ENCODE measurements at regions of chr16 and their contacts with region 1.

Region 1: DNA sequence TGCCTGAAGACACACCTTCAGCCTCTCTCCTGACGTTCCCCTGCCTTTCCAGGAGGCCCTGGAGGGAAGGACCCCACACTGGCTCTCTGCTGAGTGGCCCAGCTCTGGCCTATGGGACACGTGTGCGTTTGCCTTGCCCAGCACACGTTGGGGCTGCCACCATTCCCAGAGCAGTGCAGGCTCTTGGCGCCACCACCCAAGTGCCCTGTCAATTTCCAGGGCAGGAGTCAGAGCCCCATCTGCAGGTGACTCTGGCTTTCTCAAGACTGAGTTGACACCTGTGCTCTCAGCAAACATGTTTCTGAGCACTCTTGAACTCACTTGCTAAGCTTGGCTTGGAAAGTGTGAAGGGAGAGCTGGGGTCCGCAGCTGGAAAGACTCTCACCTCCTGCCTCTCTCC is 4.7 kb upstream of the IRF8 start:
- DNase-seq: peak; percentile 67
- H3K4me3 Mint-ChIP-seq: no peak overlapping the region
- H3K27ac Mint-ChIP-seq: no peak overlapping the region
- H3K4me1 Mint-ChIP-seq: peaks cover 45% of the 10 kb centered on the region
- H3K27me3 Mint-ChIP-seq: peaks cover 43% of the 10 kb centered on the region
- CTCF ChIP-seq: peak; percentile 31

Region 2: DNA sequence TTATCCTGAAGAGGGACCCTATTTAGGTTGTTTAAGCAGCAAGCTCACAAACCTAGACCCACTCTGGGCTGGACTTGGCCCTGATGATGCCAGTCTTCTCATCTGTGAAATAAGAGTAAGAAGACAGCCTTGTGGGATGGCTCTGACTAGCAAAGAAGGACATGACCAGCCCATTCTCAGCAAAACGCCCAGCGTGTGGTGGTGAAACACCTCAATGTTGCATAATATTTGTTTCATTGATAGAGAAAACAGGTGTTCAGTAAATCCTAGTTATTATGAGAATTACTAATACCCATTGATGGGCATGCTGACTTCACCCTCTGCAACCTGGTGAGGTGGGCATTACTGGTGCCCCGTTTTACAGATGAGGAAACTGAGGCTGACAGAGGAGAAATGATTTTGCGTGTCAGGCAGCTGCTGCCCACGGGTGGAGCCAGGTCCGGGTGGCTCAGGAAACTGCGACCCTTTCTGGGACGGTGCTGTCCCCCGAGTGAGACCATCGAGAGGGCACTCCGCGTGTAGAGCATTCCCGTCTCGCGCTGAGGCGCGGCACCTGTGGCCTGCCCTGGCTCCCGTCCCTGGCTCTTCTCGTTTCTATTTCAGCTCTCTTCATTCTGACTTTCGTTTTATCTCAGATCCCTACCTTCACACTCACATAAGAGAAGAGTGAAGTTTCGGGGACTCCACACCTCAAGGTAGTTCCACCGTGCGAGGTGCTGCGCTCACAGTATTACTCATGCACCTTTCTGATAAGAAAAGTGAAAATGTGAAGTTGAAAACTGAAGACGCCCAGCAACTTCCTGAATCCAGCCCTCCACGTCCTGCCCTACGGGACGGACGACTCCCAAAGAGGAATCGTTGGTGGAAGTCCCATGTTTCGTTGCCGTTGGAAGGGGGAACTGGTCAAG is 53.2 kb after region 1 on chr16:
- CTCF ChIA-PET with region 1: no interaction called
- intact Hi-C with region 1: no loop called
- DNase-seq: peak; percentile 13
- H3K4me3 Mint-ChIP-seq: peak overlapping the region; percentile 46
- H3K27ac Mint-ChIP-seq: no peak overlapping the region
- H3K4me1 Mint-ChIP-seq: no peaks in the 10 kb centered on the region
- H3K27me3 Mint-ChIP-seq: peaks cover 39% of the 10 kb centered on the region
- CTCF ChIP-seq: no peak

Region 3: DNA sequence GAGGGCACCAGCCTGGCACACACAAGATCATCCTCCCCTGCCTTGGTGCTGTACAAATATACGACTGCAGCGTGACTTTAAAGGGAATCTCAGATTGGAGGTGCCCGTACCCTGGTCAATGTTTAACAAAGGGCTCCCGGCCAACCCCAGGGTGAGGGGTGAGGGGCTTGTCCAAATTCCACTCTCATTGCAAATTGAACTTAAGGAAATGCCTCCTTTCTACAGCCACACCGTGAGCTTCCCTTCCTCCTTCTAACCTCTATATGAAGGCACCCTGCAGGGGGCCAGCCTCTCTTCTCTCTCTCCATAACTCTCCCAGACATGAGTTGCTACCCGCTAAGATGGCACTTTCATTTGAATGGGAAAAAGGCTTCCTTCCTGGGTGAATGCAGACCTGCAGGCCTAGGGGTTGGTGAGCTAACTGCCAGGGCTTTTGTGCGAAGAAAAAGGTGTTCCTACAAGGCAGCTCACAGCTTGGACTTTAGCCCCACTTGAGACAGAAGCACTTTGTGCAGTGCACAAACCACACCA is 81.2 kb after region 1 on chr16:
- CTCF ChIA-PET with region 1: no interaction called
- intact Hi-C with region 1: loop called (anchors 2 kb)
- DNase-seq: peak; percentile 75
- H3K4me3 Mint-ChIP-seq: peak overlapping the region; percentile 39
- H3K27ac Mint-ChIP-seq: peak overlapping the region; percentile 34
- H3K4me1 Mint-ChIP-seq: peaks cover 50% of the 10 kb centered on the region
- H3K27me3 Mint-ChIP-seq: peaks cover 5% of the 10 kb centered on the region
- CTCF ChIP-seq: no peak